Posterior cingulate gyrus (tissue), 11 donors: ENCODE measurements at regions of chr10 and their contacts with region 1.

Region 1: GRCh38 chr10:121598207-121598862 is at the start of gene FGFR2:
- DNase-seq: peak; percentile 65 to 96 (median 76)

Region 2: DNA sequence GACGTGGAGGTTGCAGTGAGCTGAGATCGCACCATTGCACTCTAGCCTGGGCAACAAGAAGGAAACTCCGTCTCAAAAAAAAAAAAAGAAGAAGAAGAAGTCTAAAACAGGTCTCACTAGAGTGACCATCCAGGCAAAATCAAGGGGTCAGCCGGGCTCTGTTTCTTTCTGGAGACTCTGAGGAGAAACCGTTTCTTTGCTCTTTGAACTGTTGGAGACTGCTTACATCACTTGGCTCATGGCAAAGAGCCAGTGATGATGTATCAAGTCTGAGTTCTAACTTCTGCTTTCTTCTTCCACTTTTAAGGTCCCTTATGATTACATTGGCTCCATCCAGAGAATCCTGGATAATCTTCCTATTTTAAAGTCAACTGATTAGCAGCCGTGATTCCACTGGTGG is 440.3 kb before region 1 on chr10:
- intact Hi-C with region 1: loop called (anchors 10 kb)
- DNase-seq: no peak

Region 3: DNA sequence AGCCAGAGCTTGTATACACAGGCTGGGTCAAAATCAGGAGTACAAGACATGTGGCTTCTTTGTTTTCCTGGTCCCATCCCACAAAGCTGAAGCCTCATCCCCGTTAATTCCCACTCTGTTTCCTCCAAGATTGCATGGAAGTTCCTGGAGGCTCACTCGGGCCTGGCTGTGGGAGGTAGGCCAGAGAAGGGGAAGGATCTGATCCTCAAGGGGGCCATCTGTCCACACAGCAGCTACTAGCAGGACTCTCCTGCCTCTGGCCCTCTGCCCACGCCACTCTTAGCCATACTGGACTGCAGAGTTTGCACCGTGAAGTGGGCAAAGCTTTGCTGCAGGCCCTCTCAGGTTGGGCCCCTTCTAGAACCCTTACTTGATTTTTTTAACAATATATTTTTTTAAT is 160.7 kb before region 1 on chr10:
- intact Hi-C with region 1: loop called (anchors 5 kb)
- DNase-seq: peak in 7 of 10 donors; percentile 12 to 88 (median 30)

Region 4: GRCh38 chr10:121527666-121528065 is 70.7 kb before region 1 on chr10:
- intact Hi-C with region 1: loop called (anchors 5 kb)
- DNase-seq: no peak